ENCODE measurements at regions of chr3 and their contacts with region 1.

Region 1: DNA sequence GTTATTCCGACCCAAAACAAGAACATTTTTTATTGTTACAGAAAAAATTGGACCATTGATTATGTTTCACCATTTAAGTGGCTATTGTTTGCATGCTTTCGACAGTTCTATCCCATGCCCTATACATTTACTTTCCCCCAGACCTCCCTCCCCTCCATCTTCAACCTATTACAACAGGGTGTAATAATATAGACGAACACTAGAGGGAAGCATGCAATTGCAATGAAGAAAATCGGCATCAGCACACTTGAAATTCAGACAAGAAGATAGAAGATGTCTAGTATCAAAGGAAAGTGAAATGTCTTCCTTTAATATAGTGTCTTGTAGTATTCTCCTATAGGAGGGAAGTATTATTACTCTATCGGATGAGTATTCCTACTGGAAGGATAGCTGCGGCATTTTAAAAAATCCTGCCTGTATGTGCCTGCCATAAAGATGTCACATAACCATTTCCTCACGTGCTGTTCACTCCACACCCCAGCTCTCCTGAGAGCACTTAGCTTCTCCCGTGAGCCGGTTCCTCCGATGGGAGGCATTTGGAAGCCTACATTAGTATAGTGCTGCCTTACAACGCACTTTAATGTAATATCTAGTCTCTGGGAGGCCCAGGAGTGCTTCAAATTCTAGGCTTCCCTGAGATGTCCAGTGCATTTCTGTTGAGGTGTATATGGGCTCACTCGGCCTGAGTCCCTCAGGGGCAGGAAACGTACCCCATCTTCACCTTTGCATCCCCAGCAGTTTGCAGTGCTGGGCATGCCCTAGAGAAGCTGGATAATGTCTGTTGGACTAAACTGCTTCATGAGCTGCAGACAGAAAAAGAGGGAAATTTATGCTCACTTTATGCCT is 17.8 kb upstream of the ERICH6 start:
- DNase-seq: peak in 1 of 2 donors; percentile 85
- H3K4me3 ChIP-seq: no peak overlapping the region
- H3K27ac ChIP-seq: no peak overlapping the region
- H3K4me1 ChIP-seq: peaks cover 0 to 13% (median 6%) of the 10 kb centered on the region in 4 donors
- H3K27me3 ChIP-seq: no peaks in the 10 kb centered on the region
- CTCF ChIP-seq: peak in 5 of 7 experiments; percentile 76 to 92 (median 85)
- EP300 ChIP-seq: no peak
- POLR2A ChIP-seq: no peak

Region 2: DNA sequence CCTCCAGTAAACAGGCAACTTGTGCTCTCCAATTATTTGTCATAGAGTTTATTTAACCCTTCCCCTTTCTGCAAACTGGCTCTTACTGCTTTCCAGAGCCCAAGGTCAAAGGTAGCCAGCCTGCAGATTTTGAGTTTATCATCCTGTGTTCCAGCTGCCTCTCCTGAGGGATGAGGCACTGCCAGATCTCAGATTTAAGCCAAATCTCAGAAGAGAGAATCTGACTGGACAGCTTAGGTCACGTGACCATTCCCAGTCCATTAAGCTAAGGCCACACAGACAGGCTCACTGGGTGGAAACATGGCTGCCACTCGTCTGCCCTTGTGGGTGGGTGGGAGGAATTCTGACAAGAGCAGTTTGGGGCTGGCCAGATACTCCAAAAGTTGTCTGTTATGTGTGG is 50.1 kb after region 1 on chr3:
- intact Hi-C with region 1: loop called (anchors 5 kb)
- DNase-seq: no peak
- H3K4me3 ChIP-seq: no peak overlapping the region
- H3K27ac ChIP-seq: no peak overlapping the region
- H3K4me1 ChIP-seq: no peaks in the 10 kb centered on the region
- H3K27me3 ChIP-seq: no peaks in the 10 kb centered on the region
- CTCF ChIP-seq: no peak
- EP300 ChIP-seq: no peak
- POLR2A ChIP-seq: no peak

Region 3: GRCh38 chr3:150861851-150862250 is 140.3 kb after region 1 on chr3:
- intact Hi-C with region 1: loop called (anchors 5 kb)
- DNase-seq: no peak
- H3K4me3 ChIP-seq: no peak overlapping the region
- H3K27ac ChIP-seq: no peak overlapping the region
- H3K4me1 ChIP-seq: peaks cover 0 to 8% (median 0%) of the 10 kb centered on the region in 4 donors
- H3K27me3 ChIP-seq: no peaks in the 10 kb centered on the region
- CTCF ChIP-seq: no peak
- EP300 ChIP-seq: no peak
- POLR2A ChIP-seq: no peak

Region 4: GRCh38 chr3:151015767-151016477 is 294.4 kb after region 1 on chr3:
- intact Hi-C with region 1: no loop called
- DNase-seq: no peak
- H3K4me3 ChIP-seq: no peak overlapping the region
- H3K27ac ChIP-seq: no peak overlapping the region
- H3K4me1 ChIP-seq: peaks cover 0 to 5% (median 0%) of the 10 kb centered on the region in 4 donors
- H3K27me3 ChIP-seq: no peaks in the 10 kb centered on the region
- CTCF ChIP-seq: no peak
- EP300 ChIP-seq: no peak
- POLR2A ChIP-seq: no peak